ENCODE measurements at regions of chr4 and their contacts with region 1.

Region 1: GRCh38 chr4:23135792-23136645 is 443.3 kb downstream of the GBA3 start:
- DNase-seq: no peak
- H3K4me3 Mint-ChIP-seq: no peak overlapping the region
- H3K27ac Mint-ChIP-seq: no peak overlapping the region
- H3K4me1 Mint-ChIP-seq: no peaks in the 10 kb centered on the region
- H3K27me3 Mint-ChIP-seq: peaks cover 10% of the 10 kb centered on the region

Region 2: GRCh38 chr4:22487328-22487727 is 648.7 kb before region 1 on chr4:
- CTCF ChIA-PET with region 1: no interaction called
- intact Hi-C with region 1: no loop called
- DNase-seq: no peak
- H3K4me3 Mint-ChIP-seq: no peak overlapping the region
- H3K27ac Mint-ChIP-seq: no peak overlapping the region
- H3K4me1 Mint-ChIP-seq: peaks cover 15% of the 10 kb centered on the region
- H3K27me3 Mint-ChIP-seq: no peaks in the 10 kb centered on the region

Region 3: GRCh38 chr4:23614284-23614892 is 478.4 kb after region 1 on chr4:
- CTCF ChIA-PET with region 1: no interaction called
- intact Hi-C with region 1: loop called (anchors 5 kb)
- DNase-seq: no peak
- H3K4me3 Mint-ChIP-seq: no peak overlapping the region
- H3K27ac Mint-ChIP-seq: no peak overlapping the region
- H3K4me1 Mint-ChIP-seq: no peaks in the 10 kb centered on the region
- H3K27me3 Mint-ChIP-seq: no peaks in the 10 kb centered on the region